AG04450 (cell line): ENCODE measurements at regions of chr5 and their contacts with region 1.

Region 1: DNA sequence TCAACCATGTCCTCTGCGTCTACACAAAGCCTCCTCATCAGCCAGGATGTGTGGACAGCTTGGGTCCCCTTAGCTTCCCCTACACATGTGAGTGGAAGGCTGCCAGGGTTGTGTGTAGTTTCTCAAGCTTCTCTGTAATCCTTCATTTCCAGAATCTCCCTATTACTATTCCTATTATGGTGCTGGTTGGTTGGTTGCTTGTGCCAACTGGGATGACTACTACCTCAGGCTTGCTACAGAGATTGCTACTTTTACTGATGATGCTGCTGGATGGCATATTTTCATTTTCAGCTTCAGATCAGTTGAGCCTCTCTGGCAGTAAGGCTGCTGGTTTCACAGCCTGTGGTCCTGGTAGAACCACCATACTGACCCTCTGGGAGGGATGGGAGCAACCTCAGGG is 39.9 kb downstream of the ATG10 start:
- DNase-seq: peak; percentile 4
- H3K4me3 ChIP-seq: no peak overlapping the region
- H3K27ac ChIP-seq: no peak overlapping the region
- H3K27me3 ChIP-seq: no peaks in the 10 kb centered on the region
- CTCF ChIP-seq: no peak

Region 2: GRCh38 chr5:82023644-82024043 is 11.9 kb after region 1 on chr5:
- CTCF ChIA-PET with region 1: no interaction called
- POLR2A ChIA-PET with region 1: interaction called, 10 read pairs
- DNase-seq: no peak
- H3K4me3 ChIP-seq: no peak overlapping the region
- H3K27ac ChIP-seq: no peak overlapping the region
- H3K27me3 ChIP-seq: no peaks in the 10 kb centered on the region
- CTCF ChIP-seq: no peak

Region 3: DNA sequence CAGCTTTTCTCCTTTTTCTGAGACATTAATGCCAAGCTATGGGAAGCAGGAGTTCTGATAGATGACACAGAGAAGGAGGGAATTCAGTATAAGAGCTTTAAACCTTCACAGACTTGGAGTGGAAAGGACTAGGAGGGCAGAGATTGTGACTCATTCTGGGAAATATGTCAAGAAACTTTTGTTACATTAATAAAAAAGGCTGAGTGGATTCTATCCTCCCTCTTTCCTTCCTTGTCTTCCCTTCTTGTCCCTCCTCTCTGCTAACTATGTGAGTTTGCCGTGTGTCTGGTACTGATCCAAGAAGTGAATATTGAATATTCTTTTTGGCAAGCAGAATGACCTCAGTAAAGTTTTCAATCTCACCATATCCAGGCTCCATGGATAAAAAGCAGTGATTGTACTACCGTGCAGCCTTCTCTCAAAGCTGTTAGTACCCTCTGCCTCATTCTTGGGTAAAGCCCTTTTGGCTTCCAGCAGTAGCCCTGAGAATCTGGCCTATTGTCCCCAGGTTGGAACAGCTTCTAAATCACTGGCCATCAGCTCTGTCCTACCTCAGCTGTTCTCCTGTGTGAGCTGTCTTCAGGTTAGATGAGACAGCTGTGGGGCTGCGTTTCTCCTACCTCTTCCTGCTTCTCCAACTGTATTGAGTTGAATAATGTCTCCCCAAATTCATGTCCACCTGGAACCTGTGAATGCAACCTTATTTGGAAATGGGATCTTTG is 34.0 kb after region 1 on chr5:
- CTCF ChIA-PET with region 1: no interaction called
- POLR2A ChIA-PET with region 1: no interaction called
- DNase-seq: peak; percentile 6
- H3K4me3 ChIP-seq: no peak overlapping the region
- H3K27ac ChIP-seq: no peak overlapping the region
- H3K27me3 ChIP-seq: no peaks in the 10 kb centered on the region
- CTCF ChIP-seq: no peak